ENCODE measurements at regions of chr3 and their contacts with region 1.

Region 1: GRCh38 chr3:182980204-182981037 is at the start of gene DCUN1D1:
- DNase-seq: peak; percentile 87 to 90 (median 89)
- H3K4me3 ChIP-seq: peak within 1 kb of the TSS; percentile 66 to 79
- H3K4me3 Mint-ChIP-seq: peak within 1 kb of the TSS; percentile 89 to 95 (median 92)
- H3K27ac ChIP-seq: peak within 1 kb of the TSS; percentile 75
- H3K27ac Mint-ChIP-seq: peak within 1 kb of the TSS; percentile 83 to 96 (median 88)
- H3K4me1 ChIP-seq: peaks cover 32% of the 10 kb centered on the region
- H3K4me1 Mint-ChIP-seq: peaks cover 24 to 43% (median 34%) of the 10 kb centered on the region in 4 donors
- H3K27me3 ChIP-seq: no peaks in the 10 kb centered on the region
- H3K27me3 Mint-ChIP-seq: no peaks in the 10 kb centered on the region
- total RNA-seq, gene DCUN1D1: 34.4 to 36.4 TPM

Region 2: DNA sequence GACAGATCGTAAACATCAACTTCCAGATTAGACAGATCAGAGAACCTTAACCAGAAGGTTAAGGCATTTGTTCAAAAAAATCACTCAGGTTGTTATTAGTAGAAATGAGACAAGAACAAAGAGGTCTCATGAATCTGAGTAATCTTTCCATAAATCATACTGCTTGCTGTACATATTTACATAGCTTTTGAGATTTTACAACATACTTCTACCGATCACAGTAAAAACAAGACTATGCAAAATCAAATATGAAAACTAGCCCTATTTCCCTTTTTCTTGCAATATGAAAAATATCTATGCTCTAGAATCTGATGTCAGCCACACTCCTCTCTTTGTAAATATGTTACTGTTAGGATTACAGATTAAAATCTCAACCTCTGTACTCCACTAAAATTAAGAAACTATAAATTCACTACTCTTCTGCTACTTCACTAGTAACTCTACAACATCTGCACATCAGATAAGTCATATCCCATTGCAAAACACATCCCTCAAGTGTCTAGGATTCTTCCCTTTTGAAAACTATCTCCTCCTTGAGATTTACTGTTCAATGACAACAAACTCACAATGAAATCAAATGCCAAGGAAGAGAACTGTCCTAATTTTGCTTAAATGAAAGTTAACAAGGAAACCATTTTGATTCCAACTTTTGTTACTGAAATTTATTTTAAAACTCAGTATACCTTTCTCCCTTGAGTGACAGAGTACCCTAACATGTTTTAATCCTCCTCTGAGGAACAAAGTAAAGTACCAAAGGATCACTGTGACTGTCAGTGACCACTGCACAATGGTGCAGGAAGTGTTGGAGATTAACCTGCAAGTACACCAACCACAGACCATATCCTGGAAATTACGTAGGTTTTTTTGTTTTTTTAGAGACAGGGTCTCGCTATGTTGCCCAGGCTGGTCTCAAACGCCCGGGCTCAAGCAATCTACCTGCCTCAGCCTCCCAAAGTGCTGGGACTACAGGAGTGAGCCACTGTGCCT is 12.9 kb before region 1 on chr3:
- CTCF ChIA-PET with region 1: interaction called, 4 read pairs
- POLR2A ChIA-PET with region 1: interaction called, 23 read pairs
- intact Hi-C with region 1: no loop called
- DNase-seq: peak in 4 of 5 donors; percentile 24 to 39 (median 38)
- H3K4me3 ChIP-seq: no peak overlapping the region
- H3K4me3 Mint-ChIP-seq: peak overlapping the region in 6 of 8 donors; percentile 21 to 82 (median 60)
- H3K27ac ChIP-seq: no peak overlapping the region
- H3K27ac Mint-ChIP-seq: peak overlapping the region; percentile 15 to 95 (median 68)
- H3K4me1 ChIP-seq: peaks cover 58% of the 10 kb centered on the region
- H3K4me1 Mint-ChIP-seq: peaks cover 43 to 55% (median 51%) of the 10 kb centered on the region in 4 donors
- H3K27me3 ChIP-seq: no peaks in the 10 kb centered on the region
- H3K27me3 Mint-ChIP-seq: no peaks in the 10 kb centered on the region

Measured in CD4-positive, alpha-beta memory T cell (primary cell).